ENCODE measurements at regions of chr10 and their contacts with region 1.

Region 1: DNA sequence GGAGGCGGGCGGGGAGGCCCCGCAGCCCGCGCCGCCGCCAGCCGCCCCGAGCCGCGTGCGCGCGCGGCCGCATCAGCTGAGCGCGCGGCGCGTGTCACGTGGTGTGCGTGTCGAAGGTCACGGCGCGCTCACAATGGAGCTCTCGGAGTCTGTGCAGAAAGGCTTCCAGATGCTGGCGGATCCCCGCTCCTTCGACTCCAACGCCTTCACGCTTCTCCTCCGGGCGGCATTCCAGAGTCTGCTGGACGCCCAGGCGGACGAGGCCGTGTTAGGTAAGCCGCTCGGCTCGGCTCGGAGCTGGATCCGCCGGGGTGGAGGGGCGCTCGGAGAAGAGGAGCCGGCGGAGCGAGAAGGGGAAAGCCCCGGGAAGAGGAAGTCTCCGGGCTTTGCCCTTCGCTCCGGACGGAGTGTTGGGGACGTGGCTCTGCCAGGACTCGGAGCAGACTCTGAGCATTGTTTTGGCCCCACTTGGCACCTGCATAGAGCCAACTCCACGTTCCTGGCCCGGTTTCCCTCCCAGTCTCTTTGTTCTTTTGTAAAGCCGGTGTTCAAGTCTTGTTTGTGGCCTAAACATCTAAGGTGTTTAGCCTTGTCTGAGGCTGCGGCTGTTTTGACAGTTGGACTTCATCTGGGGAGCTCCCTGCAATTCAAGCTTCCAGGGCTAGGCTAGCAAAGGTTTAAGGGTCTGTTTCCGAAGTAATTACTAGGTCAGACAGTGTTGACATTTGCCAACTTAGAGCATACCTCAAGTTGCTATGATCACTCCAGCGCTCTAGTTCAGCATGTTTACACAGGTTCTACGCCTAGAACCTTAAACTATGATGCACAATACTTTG is at the start of gene COMMD3:
- DNase-seq: peak; percentile 90 to 94 (median 91)
- ATAC-seq: peak; percentile 89 to 93 (median 91)
- H3K4me3 ChIP-seq: peak within 1 kb of the TSS; percentile 66 to 85 (median 79)
- H3K27ac ChIP-seq: peak within 1 kb of the TSS; percentile 71 to 98 (median 95)
- H3K4me1 ChIP-seq: peaks cover 0 to 42% (median 28%) of the 10 kb centered on the region in 12 donors
- H3K27me3 ChIP-seq: no peaks in the 10 kb centered on the region
- CTCF ChIP-seq: no peak
- POLR2A ChIP-seq: peak in 1 of 2 donors; percentile 81
- total RNA-seq, gene COMMD3: 44.4 to 88.3 (median 74.1) TPM

Region 2: DNA sequence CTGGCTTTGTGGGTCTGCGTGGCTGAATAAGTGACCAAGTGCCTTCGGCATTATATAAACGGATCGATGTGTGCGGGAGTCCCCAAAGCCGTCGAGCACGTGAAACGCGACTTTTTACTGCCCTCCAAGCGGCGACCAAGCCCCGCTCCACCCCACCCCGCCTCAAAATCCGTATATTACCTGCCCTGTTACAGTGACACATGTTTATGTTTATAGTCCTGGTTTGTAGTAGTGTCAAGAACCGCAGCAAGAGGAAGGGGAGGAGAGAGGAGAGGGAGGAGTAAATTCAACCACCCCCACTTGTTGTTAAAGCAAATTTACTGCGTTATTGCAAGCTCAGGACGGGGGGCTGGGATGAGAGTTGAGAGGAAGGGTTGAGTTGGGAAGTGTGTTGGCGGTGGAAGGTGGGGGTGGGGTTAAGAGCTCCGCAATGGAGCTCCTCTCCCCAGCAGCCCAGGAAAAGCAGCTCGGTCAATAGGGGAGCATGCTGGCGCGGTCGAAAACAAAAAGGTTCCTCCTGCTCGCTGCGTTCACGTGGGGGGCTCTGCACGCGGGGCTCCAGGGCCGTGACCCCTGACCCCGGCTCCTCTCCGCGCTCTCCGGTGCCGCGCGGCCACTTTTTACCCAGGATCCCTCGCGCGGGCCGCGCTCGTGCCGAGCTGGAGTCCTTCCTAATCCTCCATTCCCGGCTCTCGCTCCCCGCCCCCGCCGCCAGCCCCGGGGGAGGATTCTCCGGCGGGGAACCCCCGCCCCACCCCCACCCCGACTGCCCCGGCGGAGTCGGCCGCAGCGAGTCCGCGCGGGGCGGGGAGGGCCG is 790.9 kb before region 1 on chr10 and contains the start of gene SKIDA1:
- intact Hi-C with region 1: loop called in 3 of 10 experiments (anchors 5 to 10 kb)
- DNase-seq: peak; percentile 89 to 94 (median 92)
- ATAC-seq: peak; percentile 84 to 92 (median 88)
- H3K4me3 ChIP-seq: peak within 1 kb of the TSS; percentile 54 to 85 (median 71)
- H3K27ac ChIP-seq: peak within 1 kb of the TSS; percentile 95 to 99 (median 98)
- H3K4me1 ChIP-seq: peaks cover 0 to 25% (median 8%) of the 10 kb centered on the region in 12 donors
- H3K27me3 ChIP-seq: no peaks in the 10 kb centered on the region
- CTCF ChIP-seq: no peak
- POLR2A ChIP-seq: no peak
- total RNA-seq, gene SKIDA1: 2.3 to 5.4 (median 3.6) TPM

Region 3: GRCh38 chr10:22174442-22174841 is 142.1 kb before region 1 on chr10:
- intact Hi-C with region 1: no loop called
- DNase-seq: no peak
- ATAC-seq: no peak
- H3K4me3 ChIP-seq: no peak overlapping the region
- H3K27ac ChIP-seq: no peak overlapping the region
- H3K4me1 ChIP-seq: no peaks in the 10 kb centered on the region
- H3K27me3 ChIP-seq: peaks cover 0 to 15% (median 0%) of the 10 kb centered on the region in 9 donors
- CTCF ChIP-seq: no peak
- POLR2A ChIP-seq: no peak

Region 4: DNA sequence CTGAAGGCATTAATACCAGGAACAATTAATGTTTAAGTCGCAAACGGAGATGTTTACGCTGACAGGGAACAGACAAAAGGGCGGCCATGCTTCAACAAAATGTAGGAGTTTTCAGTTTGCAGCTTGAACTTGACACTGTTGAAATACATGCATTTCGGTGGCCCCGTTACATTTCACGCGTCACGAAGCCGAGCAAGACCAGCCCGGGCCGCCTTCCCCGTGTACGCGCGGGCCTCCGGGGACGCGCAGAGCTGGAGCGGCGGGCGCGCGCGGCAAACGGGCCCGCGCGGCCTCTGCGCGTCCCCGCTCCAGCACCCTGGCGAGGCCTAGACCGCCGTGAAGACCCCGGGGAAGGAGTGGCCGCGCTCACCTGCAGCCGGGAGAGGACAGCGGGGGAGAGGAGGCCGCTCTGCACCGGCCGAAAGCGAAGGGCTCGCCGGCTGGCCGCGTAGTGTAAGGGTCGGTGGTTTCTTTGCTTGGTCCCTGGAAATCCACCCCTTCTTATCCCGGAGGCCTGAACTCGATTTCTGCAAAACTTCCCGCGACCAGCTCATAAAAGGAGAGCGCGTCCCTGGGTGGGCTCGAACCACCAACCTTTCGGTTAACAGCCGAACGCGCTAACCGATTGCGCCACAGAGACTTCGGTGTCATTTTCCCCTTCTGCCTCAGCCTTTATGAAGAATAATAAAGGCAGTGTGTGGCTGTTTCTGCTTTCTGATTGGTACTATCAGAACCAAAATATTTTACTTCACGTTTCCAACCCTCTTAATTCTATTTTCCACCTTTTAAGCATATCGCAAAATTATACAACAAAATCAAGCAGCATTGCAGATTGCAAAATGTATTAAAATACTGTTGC is 87.3 kb before region 1 on chr10:
- intact Hi-C with region 1: loop called in 9 of 10 experiments (anchors 1 to 5 kb)
- DNase-seq: peak; percentile 85 to 90 (median 88)
- ATAC-seq: peak; percentile 91 to 100 (median 98)
- H3K4me3 ChIP-seq: peak overlapping the region; percentile 57 to 89 (median 77)
- H3K27ac ChIP-seq: peak overlapping the region; percentile 85 to 97 (median 92)
- H3K4me1 ChIP-seq: peaks cover 0 to 9% (median 6%) of the 10 kb centered on the region in 12 donors
- H3K27me3 ChIP-seq: no peaks in the 10 kb centered on the region
- CTCF ChIP-seq: no peak
- POLR2A ChIP-seq: peak in 1 of 2 donors; percentile 56

Region 5: DNA sequence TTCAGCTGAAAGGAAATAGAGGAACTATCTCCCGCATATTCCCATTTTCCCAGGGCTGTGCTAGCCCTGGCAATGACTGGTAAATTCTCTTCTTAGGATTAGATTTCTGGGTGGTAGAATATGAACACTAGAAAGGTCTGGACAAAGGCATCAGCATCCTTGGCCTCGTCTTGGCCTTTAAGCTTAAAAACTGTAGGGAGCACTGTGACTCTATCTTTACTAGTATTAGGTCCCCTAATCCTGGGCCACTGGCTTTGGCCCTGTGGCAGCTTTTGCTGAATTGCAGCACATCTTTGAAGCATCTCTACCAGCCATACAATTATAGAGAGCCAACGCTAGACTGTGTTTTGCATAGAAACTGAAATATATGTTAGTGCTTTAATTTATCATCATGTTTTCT is 57.2 kb before region 1 on chr10:
- intact Hi-C with region 1: loop called in 7 of 10 experiments (anchors 5 kb)
- DNase-seq: no peak
- ATAC-seq: no peak
- H3K4me3 ChIP-seq: no peak overlapping the region
- H3K27ac ChIP-seq: no peak overlapping the region
- H3K4me1 ChIP-seq: peaks cover 0 to 6% (median 0%) of the 10 kb centered on the region in 12 donors
- H3K27me3 ChIP-seq: peaks cover 0 to 1% (median 0%) of the 10 kb centered on the region in 9 donors
- CTCF ChIP-seq: no peak
- POLR2A ChIP-seq: no peak

Region 6: DNA sequence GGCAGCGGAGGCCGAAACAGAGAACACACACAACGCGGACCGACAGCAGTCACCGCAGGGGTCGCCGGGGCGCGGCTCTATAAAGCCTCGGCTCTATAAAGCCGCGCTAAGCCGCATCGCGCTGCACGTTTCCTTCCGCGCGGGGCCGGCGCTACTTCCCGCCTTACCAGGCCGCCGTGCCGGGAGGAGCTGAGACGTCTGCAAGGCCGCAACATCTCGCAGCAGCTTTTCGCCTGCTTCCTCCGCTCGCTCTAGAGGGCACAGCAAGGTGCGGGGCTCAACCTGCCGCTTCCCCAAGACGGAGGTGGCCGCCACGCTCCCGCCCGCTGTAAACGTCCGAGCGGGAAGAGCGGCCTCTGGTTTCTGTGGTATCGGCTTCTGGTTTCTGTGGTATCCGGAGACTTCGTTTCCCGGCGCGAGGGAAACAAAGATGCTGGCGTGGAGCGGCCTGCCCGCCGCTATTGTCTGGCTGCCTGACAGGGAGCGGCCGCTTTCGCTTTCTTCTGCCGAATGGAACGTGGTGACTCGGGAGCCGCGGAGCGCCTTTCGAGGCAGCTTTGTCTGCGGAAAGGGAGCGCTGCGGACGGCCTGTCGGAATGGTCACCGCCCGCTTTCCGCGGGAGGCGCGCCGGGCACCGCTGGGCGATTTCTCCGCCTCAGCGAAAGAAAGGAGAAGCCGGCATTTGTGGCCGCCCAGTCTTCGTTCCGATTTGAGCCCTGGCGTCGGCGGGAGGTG is 120.5 kb after region 1 on chr10:
- intact Hi-C with region 1: loop called in 1 of 10 experiments (anchors 2 kb)
- DNase-seq: peak; percentile 90 to 96 (median 93)
- ATAC-seq: peak; percentile 89 to 97 (median 97)
- H3K4me3 ChIP-seq: peak overlapping the region; percentile 54 to 88 (median 76)
- H3K27ac ChIP-seq: peak overlapping the region; percentile 78 to 98 (median 95)
- H3K4me1 ChIP-seq: peaks cover 0 to 30% (median 15%) of the 10 kb centered on the region in 12 donors
- H3K27me3 ChIP-seq: peaks cover 0 to 3% (median 0%) of the 10 kb centered on the region in 9 donors
- CTCF ChIP-seq: peak in 8 of 12 donors; percentile 5 to 50 (median 27)
- POLR2A ChIP-seq: peak in 1 of 2 donors; percentile 78

Measured in heart left ventricle (tissue), 16 donors.